SK-N-SH (cell line): ENCODE measurements at regions of chr5 and their contacts with region 1.

Region 1: GRCh38 chr5:54517174-54518092 is at the start of gene SNX18:
- DNase-seq: peak; percentile 96
- H3K4me3 ChIP-seq: peak within 1 kb of the TSS; percentile 77 to 93
- H3K27ac ChIP-seq: peak within 1 kb of the TSS in 1 of 2 experiments; percentile 83; a peak in 3 of 4 replicates
- H3K4me1 ChIP-seq: peaks cover 15 to 35% of the 10 kb centered on the region in 2 experiments; a peak in 3 of 4 replicates
- H3K27me3 ChIP-seq: no peaks in the 10 kb centered on the region
- CTCF ChIP-seq: peak; percentile 96
- EP300 ChIP-seq: peak; percentile 25 to 35; a peak in 1 of 4 replicates
- RAD21 ChIP-seq: peak; percentile 94
- polyA plus RNA-seq, gene SNX18: 4.3 and 4.6 TPM in 2 replicates

Region 2: DNA sequence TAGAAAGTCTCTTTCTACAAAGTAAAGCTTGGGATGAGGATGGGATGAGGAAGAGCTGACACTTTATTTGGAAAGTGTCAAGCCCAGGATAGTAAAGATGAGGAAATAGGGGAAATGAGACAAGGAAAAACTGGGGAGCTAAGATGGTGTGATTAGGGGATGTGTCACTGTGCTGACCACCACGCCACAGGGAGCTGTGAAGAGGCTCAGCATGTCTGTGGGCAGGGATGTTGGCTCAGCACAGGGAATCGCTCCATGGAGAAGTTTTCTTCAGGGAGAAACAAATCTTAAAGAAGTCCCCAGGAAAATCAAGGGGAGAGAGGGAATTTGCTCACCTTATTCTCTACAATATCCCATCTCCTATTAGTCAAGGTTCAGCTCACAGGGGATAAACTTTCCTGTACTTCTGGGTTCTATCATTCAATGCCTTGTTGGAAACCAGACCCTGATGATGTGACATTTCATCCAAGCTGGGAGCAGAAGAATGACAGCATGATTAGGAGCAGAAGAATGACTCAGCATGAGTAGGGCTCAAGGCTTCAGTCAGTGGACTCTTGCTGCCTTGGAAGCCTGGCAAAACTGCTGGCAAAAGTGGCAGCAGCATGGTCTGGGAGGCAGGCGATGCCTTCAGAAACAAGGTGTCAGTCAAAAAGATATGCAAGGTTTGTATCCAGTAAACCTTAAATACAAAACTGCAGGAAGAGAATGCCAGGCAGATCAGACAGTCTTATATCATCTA is 57.1 kb before region 1 on chr5:
- CTCF ChIA-PET with region 1: no interaction called
- POLR2A ChIA-PET with region 1: no interaction called
- DNase-seq: no peak
- H3K4me3 ChIP-seq: no peak overlapping the region
- H3K27ac ChIP-seq: no peak overlapping the region; a peak in 1 of 4 replicates
- H3K4me1 ChIP-seq: peaks cover 5 to 17% of the 10 kb centered on the region in 2 experiments; a peak in 3 of 4 replicates
- H3K27me3 ChIP-seq: no peaks in the 10 kb centered on the region
- CTCF ChIP-seq: no peak
- EP300 ChIP-seq: no peak
- RAD21 ChIP-seq: no peak

Region 3: GRCh38 chr5:54548565-54548964 is 31.1 kb after region 1 on chr5:
- CTCF ChIA-PET with region 1: interaction called, 12 read pairs
- POLR2A ChIA-PET with region 1: no interaction called
- DNase-seq: no peak
- H3K4me3 ChIP-seq: no peak overlapping the region
- H3K27ac ChIP-seq: no peak overlapping the region
- H3K4me1 ChIP-seq: peaks cover 0 to 4% of the 10 kb centered on the region in 2 experiments; a peak in 2 of 4 replicates
- H3K27me3 ChIP-seq: no peaks in the 10 kb centered on the region
- CTCF ChIP-seq: no peak
- EP300 ChIP-seq: no peak
- RAD21 ChIP-seq: no peak

Region 4: DNA sequence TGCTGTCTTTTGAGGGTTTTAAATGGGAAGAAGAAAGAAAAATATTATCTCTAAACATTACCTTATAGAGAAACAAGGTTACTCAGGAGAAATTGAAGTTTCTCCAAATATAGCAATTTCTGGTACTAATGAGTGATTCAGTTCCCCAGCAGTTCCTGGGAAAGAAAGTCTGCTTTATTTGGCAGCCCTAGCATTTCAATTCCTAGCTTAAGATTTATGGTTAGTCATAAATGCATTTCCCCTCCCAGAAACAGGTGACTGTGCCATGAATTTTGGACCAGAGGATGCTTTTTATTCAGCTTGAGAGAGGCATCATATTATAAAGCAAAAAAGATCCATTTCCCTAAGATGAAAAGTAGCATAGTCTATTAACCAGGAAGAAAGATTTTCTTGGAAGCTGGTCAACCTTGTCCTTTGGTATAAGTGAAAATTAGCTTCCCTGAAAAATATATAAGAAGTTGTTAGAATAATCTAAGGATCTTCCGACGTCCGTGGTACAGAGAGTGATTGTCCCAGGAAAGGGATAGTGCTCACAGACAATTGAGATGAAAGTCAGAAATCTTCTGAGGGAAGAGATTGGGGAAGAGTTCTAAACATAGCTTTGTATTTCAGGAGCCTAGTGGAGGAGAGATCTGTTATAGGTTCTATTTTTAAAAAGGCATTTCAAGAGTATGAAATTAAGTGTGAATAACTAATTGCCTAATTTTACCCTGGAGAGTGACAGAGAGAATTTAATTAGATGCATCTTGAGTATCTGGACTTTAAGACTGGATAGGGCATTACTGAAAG is 303.1 kb after region 1 on chr5:
- CTCF ChIA-PET with region 1: interaction called, 13 read pairs
- POLR2A ChIA-PET with region 1: no interaction called
- DNase-seq: no peak
- H3K4me3 ChIP-seq: no peak overlapping the region
- H3K27ac ChIP-seq: peak overlapping the region; percentile 22 to 53; a peak in 2 of 4 replicates
- H3K4me1 ChIP-seq: no peaks in the 10 kb centered on the region
- H3K27me3 ChIP-seq: no peaks in the 10 kb centered on the region
- CTCF ChIP-seq: no peak
- EP300 ChIP-seq: no peak
- RAD21 ChIP-seq: no peak

Region 5: DNA sequence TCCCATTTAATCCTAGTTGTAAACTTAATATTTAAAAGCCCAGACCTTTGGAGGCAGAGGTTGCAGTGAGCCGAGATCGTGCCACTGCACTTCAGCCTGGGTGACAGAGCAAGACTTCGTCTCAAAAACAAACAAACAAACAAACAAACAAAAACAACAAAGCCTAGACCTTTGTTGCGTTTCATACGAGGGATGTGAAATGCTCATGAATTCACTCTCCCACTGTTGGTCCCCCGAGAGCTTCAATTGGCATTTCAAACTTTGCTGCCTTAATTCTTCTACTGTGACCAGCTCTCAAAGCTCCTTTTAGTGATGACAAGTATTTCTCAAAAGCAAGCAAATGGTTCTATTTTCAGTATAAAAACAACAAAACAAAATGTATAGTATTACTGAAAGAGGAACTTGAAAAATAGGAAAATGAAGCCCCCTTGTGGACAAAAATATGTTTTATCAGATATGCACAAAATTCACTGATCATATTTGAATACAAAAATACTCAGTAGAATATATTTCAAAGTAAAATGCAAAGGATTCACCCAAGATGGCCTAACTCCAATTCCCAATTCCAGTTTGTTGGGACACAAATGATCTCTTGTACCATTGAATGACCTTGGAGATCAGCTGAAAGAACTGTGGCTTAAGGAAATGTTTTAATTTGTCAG is 327.6 kb after region 1 on chr5:
- CTCF ChIA-PET with region 1: interaction called, 158 read pairs
- POLR2A ChIA-PET with region 1: interaction called, 13 read pairs
- DNase-seq: peak; percentile 15
- H3K4me3 ChIP-seq: no peak overlapping the region
- H3K27ac ChIP-seq: no peak overlapping the region
- H3K4me1 ChIP-seq: peaks cover 0 to 3% of the 10 kb centered on the region in 2 experiments; a peak in 1 of 4 replicates
- H3K27me3 ChIP-seq: peaks cover 14% of the 10 kb centered on the region; the same call in 1 of the 2 replicates
- CTCF ChIP-seq: peak; percentile 72
- EP300 ChIP-seq: no peak
- RAD21 ChIP-seq: peak; percentile 80

Region 6: GRCh38 chr5:54861212-54861894 is 343.9 kb after region 1 on chr5:
- CTCF ChIA-PET with region 1: interaction called, 92 read pairs
- POLR2A ChIA-PET with region 1: no interaction called
- DNase-seq: no peak
- H3K4me3 ChIP-seq: no peak overlapping the region
- H3K27ac ChIP-seq: no peak overlapping the region
- H3K4me1 ChIP-seq: no peaks in the 10 kb centered on the region; a peak in 1 of 4 replicates
- H3K27me3 ChIP-seq: peaks cover 21% of the 10 kb centered on the region; the same call in 1 of the 2 replicates
- CTCF ChIP-seq: no peak
- EP300 ChIP-seq: no peak
- RAD21 ChIP-seq: no peak

Region 7: GRCh38 chr5:54874373-54874921 is 357.0 kb after region 1 on chr5:
- CTCF ChIA-PET with region 1: interaction called, 26 read pairs
- POLR2A ChIA-PET with region 1: no interaction called
- DNase-seq: no peak
- H3K4me3 ChIP-seq: no peak overlapping the region
- H3K27ac ChIP-seq: no peak overlapping the region
- H3K4me1 ChIP-seq: peaks cover 0 to 7% of the 10 kb centered on the region in 2 experiments; a peak in 1 of 4 replicates
- H3K27me3 ChIP-seq: peaks cover 27% of the 10 kb centered on the region
- CTCF ChIP-seq: no peak
- EP300 ChIP-seq: no peak
- RAD21 ChIP-seq: no peak